ENCODE measurements at regions of chr3 and their contacts with region 1.

Region 1: DNA sequence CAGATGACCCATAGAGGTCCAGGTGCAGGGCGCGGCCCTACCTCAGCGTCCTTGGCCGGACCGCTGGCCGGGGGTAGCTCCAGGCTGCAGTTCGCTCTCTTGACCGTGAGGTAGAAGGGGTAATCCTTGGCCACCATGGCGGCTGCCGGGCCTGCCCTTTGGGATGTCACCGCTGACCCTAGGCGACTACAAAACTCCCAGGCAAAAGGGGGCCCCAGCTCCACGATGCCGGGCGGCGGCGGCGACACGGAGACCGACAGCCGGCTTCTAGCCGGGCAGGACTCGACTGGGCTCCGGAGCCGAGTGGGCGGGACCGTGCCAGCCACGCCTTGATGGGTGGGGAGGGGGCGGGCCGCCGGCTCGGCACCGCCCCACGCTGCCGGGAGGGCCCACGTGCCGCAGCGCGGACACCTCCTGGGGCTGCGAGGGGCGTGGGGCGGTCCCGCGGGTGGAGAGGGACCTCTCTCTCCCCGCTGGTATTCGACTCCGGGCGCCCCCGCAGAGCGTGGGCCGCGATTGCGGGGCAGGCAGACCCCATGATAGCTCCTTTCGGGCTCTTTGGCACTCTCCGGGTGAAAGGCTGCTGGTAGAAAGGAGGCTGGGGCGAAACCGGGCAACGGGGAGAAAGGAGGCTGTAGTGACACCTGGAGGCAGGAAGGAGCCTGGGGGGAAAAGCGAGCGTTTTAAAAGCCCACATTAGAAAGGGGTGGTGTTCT is at the start of gene ARHGEF3:
- DNase-seq: peak; percentile 82 to 84
- H3K4me3 ChIP-seq: peak within 1 kb of the TSS; percentile 21 to 93 (median 58)
- H3K27ac ChIP-seq: peak within 1 kb of the TSS; percentile 51 to 69 (median 60)
- H3K4me1 ChIP-seq: peaks cover 22 to 24% of the 10 kb centered on the region in 2 donors
- H3K27me3 ChIP-seq: no peaks in the 10 kb centered on the region
- CTCF ChIP-seq: peak in 4 of 6 experiments; percentile 30 to 38 (median 34)
- POLR2A ChIP-seq: peak; percentile 72 to 95
- total RNA-seq, gene ARHGEF3: 15.7 to 20.8 (median 18.8) TPM

Region 2: DNA sequence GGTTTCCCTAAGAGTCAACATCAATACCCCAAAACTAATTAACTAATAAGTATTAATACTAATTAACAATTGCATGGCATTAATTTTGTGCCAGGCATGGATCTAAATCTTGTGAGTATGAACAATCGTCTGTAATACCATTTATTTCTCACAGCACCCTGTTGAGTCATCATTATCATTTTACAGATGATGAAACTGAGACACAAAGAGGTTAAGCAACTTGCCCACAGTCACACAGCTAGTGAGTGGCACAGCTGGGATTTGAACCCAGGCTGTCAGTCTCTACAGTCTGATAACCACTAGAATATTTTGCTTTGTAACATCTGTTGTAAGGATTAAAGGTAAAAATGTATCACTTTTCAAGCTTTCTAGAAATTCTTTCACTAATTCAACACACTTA is 891.3 kb before region 1 on chr3:
- intact Hi-C with region 1: no loop called
- DNase-seq: no peak
- H3K4me3 ChIP-seq: no peak overlapping the region
- H3K27ac ChIP-seq: no peak overlapping the region
- H3K4me1 ChIP-seq: no peaks in the 10 kb centered on the region
- H3K27me3 ChIP-seq: no peaks in the 10 kb centered on the region
- CTCF ChIP-seq: no peak
- POLR2A ChIP-seq: no peak

Region 3: DNA sequence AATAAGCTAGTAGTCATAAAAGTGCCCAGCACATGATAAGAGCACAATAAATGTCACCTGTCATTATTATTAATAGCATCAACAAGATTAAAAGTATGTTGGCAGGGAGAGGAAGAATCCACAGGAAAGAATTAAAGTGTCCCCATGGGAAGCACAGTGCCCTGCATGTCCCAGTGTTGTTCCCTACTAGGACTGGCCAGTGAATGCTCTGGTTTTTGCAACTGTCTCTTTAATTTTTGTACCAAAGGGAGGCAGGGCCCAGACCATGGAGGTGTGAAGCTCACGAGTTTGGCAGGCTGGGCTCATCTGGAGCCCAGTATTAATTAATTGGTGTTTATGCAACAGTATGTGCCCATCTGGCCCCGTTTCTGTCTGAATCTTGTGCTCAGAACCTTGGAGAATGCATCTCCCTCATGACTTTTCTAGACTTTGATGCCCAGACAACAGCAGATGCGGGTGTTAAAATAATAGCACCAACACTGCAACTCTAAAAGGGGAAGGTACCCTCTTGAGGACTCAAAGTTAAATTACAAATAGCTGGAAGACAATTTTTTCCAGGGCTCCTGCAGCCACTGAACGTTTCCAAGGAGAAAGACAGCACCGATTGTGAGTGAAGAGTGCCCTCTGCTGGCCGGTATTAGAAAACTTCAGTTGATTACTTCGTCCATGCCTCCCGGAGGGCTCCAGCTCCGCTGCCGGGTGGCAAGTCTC is 186.8 kb after region 1 on chr3:
- intact Hi-C with region 1: loop called (anchors 2 kb)
- DNase-seq: peak; percentile 80 to 85
- H3K4me3 ChIP-seq: no peak overlapping the region
- H3K27ac ChIP-seq: no peak overlapping the region
- H3K4me1 ChIP-seq: peaks cover 22 to 41% of the 10 kb centered on the region in 2 donors
- H3K27me3 ChIP-seq: no peaks in the 10 kb centered on the region
- CTCF ChIP-seq: peak; percentile 74 to 93 (median 80)
- POLR2A ChIP-seq: no peak

Region 4: DNA sequence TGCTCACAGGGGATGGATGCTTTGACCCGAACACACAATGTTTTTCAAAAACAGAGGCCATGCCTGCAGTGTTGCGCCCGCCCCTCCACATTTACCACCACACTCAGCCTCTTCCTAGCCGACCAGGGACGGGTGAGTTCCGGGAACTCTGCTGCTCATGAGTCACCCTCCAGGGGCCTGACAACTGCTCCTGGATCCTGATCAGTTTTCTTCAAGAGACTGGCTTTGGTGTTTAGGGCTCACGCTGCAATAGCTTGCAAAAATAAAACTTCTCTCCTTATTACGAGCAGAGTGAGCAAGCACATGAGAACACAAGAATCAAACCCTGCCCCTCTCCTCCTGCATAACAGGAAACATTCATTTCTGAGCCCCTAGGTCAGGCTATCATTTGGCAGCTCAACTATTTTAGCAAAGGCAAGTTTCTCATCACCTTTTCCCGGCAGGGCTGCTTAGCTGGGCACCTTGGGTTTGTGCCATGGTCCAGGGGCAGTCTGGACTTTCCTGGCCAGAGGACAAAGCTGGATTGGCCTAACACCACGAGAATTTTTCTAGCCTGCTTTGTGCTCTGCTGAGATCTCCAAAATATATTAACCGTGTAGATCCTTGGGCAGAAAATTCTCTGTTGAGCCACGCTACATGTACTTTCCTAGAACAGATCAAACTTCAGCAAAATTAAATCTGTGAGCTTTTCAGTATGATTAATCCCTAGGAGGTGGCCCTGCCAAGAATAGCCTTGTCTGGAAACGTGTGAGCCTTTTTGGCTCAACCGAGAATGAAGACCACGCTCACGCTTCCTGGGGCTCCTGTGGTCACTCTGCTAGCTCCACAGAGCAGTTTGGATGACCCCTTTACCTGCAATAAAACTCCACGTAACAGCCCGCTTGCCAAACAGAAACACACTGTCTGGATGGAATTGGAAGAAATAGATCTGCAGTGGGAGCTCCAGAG is 206.0 kb after region 1 on chr3:
- intact Hi-C with region 1: no loop called
- DNase-seq: peak; percentile 66 to 68
- H3K4me3 ChIP-seq: no peak overlapping the region
- H3K27ac ChIP-seq: peak overlapping the region; percentile 37 to 76 (median 71)
- H3K4me1 ChIP-seq: peaks cover 22 to 31% of the 10 kb centered on the region in 2 donors
- H3K27me3 ChIP-seq: no peaks in the 10 kb centered on the region
- CTCF ChIP-seq: no peak
- POLR2A ChIP-seq: no peak

Measured in thyroid gland (tissue), 4 donors.